ENCODE measurements at regions of chr4 and their contacts with region 1.

Region 1: GRCh38 chr4:173318648-173319211 is 15.4 kb downstream of the HMGB2 start:
- DNase-seq: no peak
- ATAC-seq: peak; percentile 64
- H3K4me3 Mint-ChIP-seq: no peak overlapping the region
- H3K27ac Mint-ChIP-seq: no peak overlapping the region
- H3K4me1 Mint-ChIP-seq: peaks cover 9% of the 10 kb centered on the region
- H3K27me3 Mint-ChIP-seq: no peaks in the 10 kb centered on the region
- CTCF ChIP-seq: peak; percentile 65

Region 2: GRCh38 chr4:173211838-173212237 is 106.9 kb before region 1 on chr4:
- CTCF ChIA-PET with region 1: no interaction called
- POLR2A ChIA-PET with region 1: no interaction called
- intact Hi-C with region 1: no loop called
- DNase-seq: no peak
- ATAC-seq: peak; percentile 81
- H3K4me3 Mint-ChIP-seq: no peak overlapping the region
- H3K27ac Mint-ChIP-seq: no peak overlapping the region
- H3K4me1 Mint-ChIP-seq: peaks cover 17% of the 10 kb centered on the region
- H3K27me3 Mint-ChIP-seq: no peaks in the 10 kb centered on the region
- CTCF ChIP-seq: no peak

Region 3: GRCh38 chr4:173420324-173420752 is 101.6 kb after region 1 on chr4:
- CTCF ChIA-PET with region 1: interaction called, 91 read pairs
- POLR2A ChIA-PET with region 1: interaction called, 3 read pairs
- intact Hi-C with region 1: loop called (anchors 1 kb)
- DNase-seq: no peak
- ATAC-seq: no peak
- H3K4me3 Mint-ChIP-seq: no peak overlapping the region
- H3K27ac Mint-ChIP-seq: no peak overlapping the region
- H3K4me1 Mint-ChIP-seq: peaks cover 6% of the 10 kb centered on the region
- H3K27me3 Mint-ChIP-seq: no peaks in the 10 kb centered on the region
- CTCF ChIP-seq: peak; percentile 42

Region 4: DNA sequence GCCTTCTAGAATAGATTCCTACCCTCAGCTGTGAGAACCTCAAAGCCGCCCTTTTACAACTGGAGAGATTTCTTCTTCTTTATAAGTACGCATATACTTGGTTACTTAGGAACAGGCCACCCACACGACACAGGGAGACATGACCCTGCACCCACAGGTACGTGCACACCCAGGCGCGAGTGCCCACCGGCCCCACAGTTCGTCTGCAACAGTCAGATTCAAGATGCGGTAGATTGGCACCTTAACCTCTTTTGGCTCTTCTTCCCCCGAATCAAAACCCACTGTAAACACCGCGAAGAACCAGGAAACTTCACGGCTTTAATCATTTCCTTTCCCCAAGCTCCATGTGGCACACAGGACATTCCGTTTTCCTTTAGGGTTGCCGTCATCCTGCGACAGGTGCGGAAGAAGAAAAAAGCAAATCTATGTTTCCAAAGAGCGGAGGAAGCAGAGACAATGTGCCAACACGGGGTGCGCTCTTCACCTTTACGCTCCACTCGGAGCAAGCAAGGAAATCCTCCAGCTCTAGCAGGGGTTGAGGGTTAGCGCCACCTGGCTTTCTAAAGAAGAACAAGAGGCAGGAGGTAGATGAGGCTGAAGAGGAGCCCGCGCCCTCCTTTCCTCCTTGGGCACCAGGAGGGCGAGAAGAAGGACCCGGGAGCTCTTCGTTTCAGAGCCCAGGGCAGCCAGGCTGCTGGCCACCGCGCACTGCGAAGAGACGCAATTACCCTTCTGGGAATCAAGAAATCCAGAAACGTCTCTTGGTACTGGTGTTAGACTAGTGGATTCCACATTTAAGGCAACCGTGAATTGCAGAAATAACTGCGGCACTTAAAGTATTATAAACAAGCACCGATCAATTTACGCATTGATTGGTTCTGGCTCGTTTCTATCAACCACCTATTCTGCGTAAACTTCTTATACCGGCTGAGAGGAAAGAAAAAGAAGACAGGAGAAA is 175.6 kb after region 1 on chr4:
- CTCF ChIA-PET with region 1: interaction called, 3 read pairs
- POLR2A ChIA-PET with region 1: no interaction called
- intact Hi-C with region 1: loop called (anchors 10 kb)
- DNase-seq: peak; percentile 78
- ATAC-seq: peak; percentile 97
- H3K4me3 Mint-ChIP-seq: peak overlapping the region; percentile 78
- H3K27ac Mint-ChIP-seq: no peak overlapping the region
- H3K4me1 Mint-ChIP-seq: peaks cover 7% of the 10 kb centered on the region
- H3K27me3 Mint-ChIP-seq: peaks cover 26% of the 10 kb centered on the region
- CTCF ChIP-seq: peak; percentile 66

Region 5: GRCh38 chr4:174069848-174070330 is 751.2 kb after region 1 on chr4:
- CTCF ChIA-PET with region 1: no interaction called
- POLR2A ChIA-PET with region 1: no interaction called
- intact Hi-C with region 1: no loop called
- DNase-seq: no peak
- ATAC-seq: no peak
- H3K4me3 Mint-ChIP-seq: no peak overlapping the region
- H3K27ac Mint-ChIP-seq: no peak overlapping the region
- H3K4me1 Mint-ChIP-seq: no peaks in the 10 kb centered on the region
- H3K27me3 Mint-ChIP-seq: peaks cover 3% of the 10 kb centered on the region
- CTCF ChIP-seq: no peak

Measured in activated CD8-positive, alpha-beta T cell treated with anti-CD3 and anti-CD28 coated beads for 36 hours (primary cell).